Mammary epithelial cell (primary cell): ENCODE measurements at regions of chr11 and their contacts with region 1.

Region 1: DNA sequence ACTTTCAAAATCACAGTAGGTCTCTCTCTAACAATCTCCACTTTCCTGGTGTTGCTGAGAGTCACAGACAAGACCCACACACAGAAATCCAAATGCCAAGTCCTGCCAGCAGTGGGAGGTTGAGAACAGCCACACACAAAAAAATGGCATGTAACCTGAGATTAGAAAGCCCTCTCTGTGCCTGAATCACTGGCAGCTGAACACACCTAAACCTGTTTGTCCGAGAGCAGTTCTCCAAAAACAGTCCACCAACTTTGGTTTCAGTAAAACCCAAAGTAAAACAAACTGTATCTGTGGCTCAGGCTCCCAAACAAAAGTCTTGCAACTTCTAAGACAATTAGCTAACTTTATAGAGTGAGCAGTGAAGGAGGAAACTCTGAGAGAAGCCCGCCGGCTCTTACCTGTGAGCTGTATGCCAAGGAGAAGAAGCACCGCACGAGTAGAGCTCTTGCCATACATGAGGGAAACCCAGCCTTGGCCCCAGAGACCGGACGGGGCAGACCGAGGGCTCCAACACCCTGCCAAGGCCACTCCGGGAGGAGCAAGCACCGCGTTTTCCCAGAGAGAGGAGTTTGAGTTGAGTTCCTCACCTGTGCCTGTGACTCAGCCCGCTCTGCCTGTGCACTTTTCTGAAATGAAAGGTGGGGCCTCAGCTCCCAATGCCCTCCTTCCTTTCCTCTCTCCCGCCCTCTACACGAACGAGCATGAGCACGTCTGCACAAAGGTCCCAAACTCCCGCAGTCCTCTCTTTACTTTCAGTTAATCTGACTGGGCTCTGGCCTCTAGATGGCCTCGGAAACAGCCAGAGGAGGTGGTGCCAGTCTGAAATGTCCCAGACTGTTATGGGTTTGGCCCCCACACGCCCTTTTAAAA is at the start of gene MPZL2:
- DNase-seq: peak; percentile 98
- H3K4me3 ChIP-seq: peak within 1 kb of the TSS; percentile 59 to 91 (median 78)
- H3K27ac ChIP-seq: peak within 1 kb of the TSS; percentile 96
- H3K4me1 ChIP-seq: peaks cover 48% of the 10 kb centered on the region
- H3K27me3 ChIP-seq: no peaks in the 10 kb centered on the region
- CTCF ChIP-seq: peak in 1 of 2 donors; percentile 39
- total RNA-seq, gene MPZL2: 82.5 to 92.3 TPM

Region 2: DNA sequence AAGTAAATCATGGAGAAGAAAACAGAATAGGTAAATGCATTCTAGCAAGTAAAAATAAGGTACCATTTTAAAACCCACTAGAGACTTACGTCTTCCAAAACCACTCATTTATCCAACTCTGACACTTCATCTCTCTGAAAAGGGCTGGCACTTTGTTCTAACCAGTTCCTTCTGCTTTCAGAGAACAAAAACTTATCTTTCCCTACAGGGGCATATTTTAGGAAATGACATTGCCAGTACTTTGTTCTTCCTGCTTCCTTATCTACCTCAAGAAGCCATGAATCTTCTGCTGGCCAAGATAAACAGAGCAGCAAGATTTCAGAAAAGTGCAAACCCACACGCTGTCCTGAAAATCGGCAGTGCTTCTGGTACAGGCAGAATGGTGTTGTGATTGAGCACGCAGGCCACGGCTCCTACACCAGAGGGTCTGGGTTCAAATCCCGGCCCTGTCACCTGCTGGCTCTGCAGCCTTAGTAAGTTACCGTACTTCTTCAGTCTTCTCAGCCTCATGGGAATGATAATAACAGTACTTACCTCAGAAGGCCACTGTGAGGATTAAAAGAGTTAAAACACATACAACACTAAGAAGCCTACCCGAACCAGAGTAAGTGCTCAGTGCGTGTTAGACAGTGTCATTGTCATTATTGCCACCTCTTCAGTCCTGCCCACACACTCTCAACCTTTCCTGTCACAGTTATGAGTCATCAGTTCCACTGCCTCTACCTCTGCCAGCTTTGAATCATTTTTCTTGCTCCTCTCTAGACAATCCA is 22.7 kb before region 1 on chr11:
- CTCF ChIA-PET with region 1: no interaction called
- dilution Hi-C with region 1: no loop called
- in situ Hi-C with region 1: no loop called
- intact Hi-C with region 1: loop called (anchors 1 kb)
- DNase-seq: peak; percentile 88
- H3K4me3 ChIP-seq: no peak overlapping the region
- H3K27ac ChIP-seq: peak overlapping the region; percentile 72
- H3K4me1 ChIP-seq: peaks cover 18% of the 10 kb centered on the region
- H3K27me3 ChIP-seq: no peaks in the 10 kb centered on the region
- CTCF ChIP-seq: no peak

Region 3: DNA sequence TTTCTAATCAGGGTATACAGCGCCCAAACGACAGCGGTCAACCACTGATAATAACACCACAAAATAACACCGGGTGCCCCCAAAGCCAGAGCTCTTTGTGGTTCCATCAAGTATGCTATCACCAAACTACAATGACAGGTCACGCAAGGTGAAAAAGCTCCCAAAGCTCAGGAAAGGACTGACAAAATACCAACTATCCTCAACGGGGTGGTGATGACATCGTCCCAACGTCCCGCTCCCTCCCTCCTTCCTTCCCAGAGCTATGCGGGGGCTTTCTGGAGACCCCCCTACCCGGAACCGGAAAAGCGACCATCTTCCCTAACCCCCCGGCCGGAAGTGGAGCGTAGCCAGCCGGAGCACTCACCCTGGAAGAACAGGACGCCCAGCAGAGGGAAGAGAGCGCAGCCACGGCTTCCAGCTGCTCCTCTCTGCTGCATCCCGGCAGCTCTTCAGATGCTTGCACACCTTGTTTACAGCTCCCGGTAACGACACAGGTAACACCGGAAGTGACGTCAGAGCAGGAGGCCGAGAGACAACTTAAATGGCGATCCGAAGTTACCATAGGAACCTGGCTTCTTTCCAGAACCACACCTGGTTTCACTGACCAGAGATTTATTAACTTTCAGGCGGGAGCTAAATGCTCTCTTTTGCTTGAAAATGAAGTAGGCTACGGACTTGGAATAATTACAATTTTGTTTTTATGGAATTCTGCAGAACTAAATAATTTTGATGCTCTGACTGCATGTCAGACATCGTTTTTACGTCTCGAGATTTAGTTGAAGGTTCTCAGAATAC is 11.9 kb before region 1 on chr11 and contains the start of gene MPZL3:
- CTCF ChIA-PET with region 1: no interaction called
- dilution Hi-C with region 1: no loop called
- in situ Hi-C with region 1: no loop called
- intact Hi-C with region 1: loop called (anchors 1 kb)
- DNase-seq: peak; percentile 98
- H3K4me3 ChIP-seq: peak within 1 kb of the TSS; percentile 58 to 81 (median 64)
- H3K27ac ChIP-seq: peak within 1 kb of the TSS; percentile 96
- H3K4me1 ChIP-seq: no peaks in the 10 kb centered on the region
- H3K27me3 ChIP-seq: no peaks in the 10 kb centered on the region
- CTCF ChIP-seq: peak in 1 of 2 donors; percentile 22
- total RNA-seq, gene MPZL3: 10.9 to 25.7 TPM